Activated T-helper 1 cell treated with anti-CD3 and anti-CD28 coated beads, Interleukin-12 subunit alpha, Interleukin-12 subunit beta, Interleukin-2, Interleukin-4 antibody, amounts not matched to agents 30 ng/mL and 10 ng/mL and 1 ng/mL, durations not matched to agents 14 hours and 24 hours and 36 hours (primary cell): ENCODE measurements at regions of chr1 and their contacts with region 1.

Region 1: GRCh38 chr1:165597883-165598675 is 33.0 kb upstream of the MGST3 start:
- DNase-seq: peak; percentile 94
- H3K4me3 Mint-ChIP-seq: peak overlapping the region; percentile 86
- H3K27ac Mint-ChIP-seq: peak overlapping the region; percentile 93
- H3K4me1 Mint-ChIP-seq: peaks cover 45% of the 10 kb centered on the region
- H3K27me3 Mint-ChIP-seq: peaks cover 43% of the 10 kb centered on the region

Region 2: GRCh38 chr1:165144757-165145397 is 453.2 kb before region 1 on chr1:
- intact Hi-C with region 1: loop called (anchors 1 kb)
- DNase-seq: peak; percentile 14
- H3K4me3 Mint-ChIP-seq: no peak overlapping the region
- H3K27ac Mint-ChIP-seq: no peak overlapping the region
- H3K4me1 Mint-ChIP-seq: no peaks in the 10 kb centered on the region
- H3K27me3 Mint-ChIP-seq: no peaks in the 10 kb centered on the region

Region 3: DNA sequence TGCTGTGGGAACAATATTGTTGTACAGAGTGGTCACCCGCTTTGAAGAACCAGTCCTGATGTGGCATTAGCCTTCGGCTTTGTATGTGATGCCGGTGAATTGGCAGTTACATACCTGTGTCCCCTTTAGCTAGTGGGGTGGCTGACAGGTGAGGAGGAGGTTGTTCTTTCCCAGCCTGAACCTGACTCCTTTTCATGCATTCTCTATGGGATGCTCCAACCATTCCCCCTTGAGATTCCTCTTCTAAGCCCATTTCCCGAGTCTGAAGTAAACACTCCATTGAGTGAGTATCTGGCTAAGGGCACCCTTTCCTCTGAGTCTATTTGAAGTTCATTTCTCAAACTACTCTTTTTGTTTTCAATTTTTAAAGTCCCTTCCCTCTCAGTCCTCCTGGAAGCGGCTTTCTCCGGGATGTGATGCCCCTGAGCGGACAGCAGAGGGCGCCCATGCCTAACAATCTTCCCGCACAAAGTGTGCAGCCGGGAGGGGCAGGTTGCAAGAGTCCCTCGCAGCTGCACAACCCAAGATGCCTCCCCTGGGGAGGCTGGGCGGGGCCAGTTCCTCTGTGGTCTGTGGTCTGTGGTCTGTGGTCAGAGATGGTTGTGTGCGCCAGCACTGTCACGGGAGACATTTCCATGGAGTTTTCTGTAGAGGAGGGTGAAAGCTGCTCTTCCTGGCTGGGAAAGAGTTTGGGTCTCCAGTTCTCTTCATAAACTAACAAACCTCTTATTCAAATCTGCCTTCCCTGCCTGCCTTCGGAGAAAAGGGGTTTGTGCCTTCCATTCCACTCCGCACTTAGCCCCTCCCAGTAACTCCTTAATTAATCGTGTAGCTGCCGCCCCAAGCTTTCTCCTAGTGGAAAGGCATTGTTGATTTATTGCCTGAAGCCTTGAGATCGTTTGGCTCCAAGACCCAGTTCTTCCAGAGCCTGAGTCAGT is 205.2 kb before region 1 on chr1:
- intact Hi-C with region 1: loop called (anchors 1 kb)
- DNase-seq: peak; percentile 90
- H3K4me3 Mint-ChIP-seq: peak overlapping the region; percentile 58
- H3K27ac Mint-ChIP-seq: peak overlapping the region; percentile 92
- H3K4me1 Mint-ChIP-seq: peaks cover 25% of the 10 kb centered on the region
- H3K27me3 Mint-ChIP-seq: peaks cover 80% of the 10 kb centered on the region

Region 4: DNA sequence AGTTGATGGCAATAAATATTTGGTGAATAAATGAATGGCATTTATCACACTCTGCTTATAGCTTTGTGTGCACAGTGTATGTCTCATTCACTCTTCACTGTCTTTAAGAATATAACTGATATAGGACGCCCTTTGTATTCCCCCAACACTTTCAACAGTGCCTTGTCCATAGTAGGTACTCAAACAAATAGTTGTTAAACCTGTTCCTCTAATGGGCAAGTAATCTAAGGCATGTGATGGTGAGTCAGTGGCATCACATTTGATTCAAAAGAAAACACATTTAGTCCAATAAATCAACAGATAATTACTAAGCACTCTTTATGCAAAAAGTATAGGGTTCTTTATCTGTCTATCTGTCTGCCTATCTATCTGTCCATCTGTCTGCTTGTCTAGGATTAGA is 141.9 kb before region 1 on chr1:
- intact Hi-C with region 1: no loop called
- DNase-seq: no peak
- H3K4me3 Mint-ChIP-seq: no peak overlapping the region
- H3K27ac Mint-ChIP-seq: no peak overlapping the region
- H3K4me1 Mint-ChIP-seq: no peaks in the 10 kb centered on the region
- H3K27me3 Mint-ChIP-seq: peaks cover 8% of the 10 kb centered on the region

Region 5: DNA sequence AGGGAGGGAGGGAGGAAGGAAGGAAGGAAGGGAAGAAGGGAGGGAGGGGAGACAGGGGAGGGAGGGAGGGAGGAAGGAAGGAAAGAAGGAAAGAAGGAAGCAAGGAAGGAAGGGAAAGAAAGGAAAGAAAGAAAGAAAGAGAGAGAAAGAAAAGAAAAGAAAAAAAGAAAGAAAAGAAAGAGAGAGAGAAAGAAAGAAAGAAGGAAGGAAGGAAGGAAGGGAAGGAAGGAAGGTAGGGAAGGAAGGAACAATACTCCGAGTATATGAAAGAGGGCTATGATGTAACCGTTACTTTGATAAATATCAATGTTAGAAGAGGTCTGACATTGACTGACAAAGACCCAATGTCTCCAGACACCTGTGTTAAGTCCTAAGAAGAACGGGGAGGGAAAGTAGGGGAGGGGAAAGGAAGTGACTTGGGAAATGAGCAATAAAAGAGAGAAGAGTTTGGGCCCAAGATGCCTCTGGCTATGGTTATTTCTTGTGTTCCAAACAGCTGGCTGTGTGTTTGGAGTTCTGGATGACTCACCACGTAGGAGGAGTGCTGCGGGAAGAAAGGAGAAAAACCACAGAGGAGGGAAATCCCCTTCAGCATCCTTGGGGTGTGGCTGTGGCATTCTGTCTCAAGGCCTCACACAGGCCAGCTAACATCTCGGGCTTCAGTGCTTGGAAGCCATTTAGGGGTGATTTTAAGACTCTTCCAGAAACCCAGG is 116.1 kb before region 1 on chr1:
- intact Hi-C with region 1: loop called (anchors 2 kb)
- DNase-seq: no peak
- H3K4me3 Mint-ChIP-seq: peak overlapping the region; percentile 12
- H3K27ac Mint-ChIP-seq: no peak overlapping the region
- H3K4me1 Mint-ChIP-seq: peaks cover 25% of the 10 kb centered on the region
- H3K27me3 Mint-ChIP-seq: peaks cover 19% of the 10 kb centered on the region

Region 6: GRCh38 chr1:165697881-165698760 is 100.0 kb after region 1 on chr1 and contains the start of gene ALDH9A1:
- intact Hi-C with region 1: loop called (anchors 1 kb)
- DNase-seq: peak; percentile 82
- H3K4me3 Mint-ChIP-seq: peak within 1 kb of the TSS; percentile 95
- H3K27ac Mint-ChIP-seq: peak within 1 kb of the TSS; percentile 97
- H3K4me1 Mint-ChIP-seq: peaks cover 20% of the 10 kb centered on the region
- H3K27me3 Mint-ChIP-seq: peaks cover 2% of the 10 kb centered on the region
- total RNA-seq, gene ALDH9A1: 41.7 and 42.8 TPM in 2 replicates

Region 7: DNA sequence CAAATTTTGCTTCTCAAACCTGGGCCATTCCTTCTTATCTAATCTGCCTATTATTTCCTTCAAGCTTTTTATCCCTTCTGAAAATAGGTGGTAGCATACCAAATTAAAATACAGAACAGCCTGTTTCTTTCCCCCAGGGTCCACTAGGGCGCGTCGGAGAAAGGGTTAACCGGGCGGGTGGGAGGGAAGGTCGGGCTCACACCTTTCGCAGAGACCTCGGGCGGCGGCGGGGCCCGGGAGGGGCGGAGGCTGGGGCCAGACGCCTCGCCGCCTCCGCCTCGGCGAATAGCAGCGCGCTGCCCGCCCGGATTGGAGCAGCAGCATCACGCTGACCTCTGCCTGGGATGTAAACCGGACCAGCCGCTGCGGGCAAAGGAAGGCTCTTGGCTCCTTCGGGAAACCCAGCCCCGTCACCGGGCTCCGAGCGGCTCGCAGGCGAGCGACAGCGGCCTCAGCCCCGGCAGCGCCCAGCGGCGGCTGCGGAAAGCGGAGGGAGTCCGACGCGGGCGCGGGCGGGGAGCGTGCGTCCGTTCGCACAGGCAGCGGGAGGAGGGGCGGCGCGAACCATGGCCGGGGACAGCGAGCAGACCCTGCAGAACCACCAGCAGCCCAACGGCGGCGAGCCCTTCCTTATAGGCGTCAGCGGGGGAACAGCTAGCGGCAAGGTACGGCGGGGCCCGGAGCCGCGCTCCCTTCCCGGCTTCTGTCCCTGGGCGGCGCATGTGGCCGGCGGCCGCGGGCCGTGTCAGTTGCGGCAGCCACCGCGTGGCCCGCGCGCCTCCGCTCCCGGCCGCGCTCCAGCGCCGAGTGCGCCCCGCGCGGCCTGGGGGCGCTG is 229.4 kb after region 1 on chr1 and contains the start of gene UCK2:
- intact Hi-C with region 1: loop called (anchors 1 kb)
- DNase-seq: peak; percentile 51
- H3K4me3 Mint-ChIP-seq: peak within 1 kb of the TSS; percentile 96
- H3K27ac Mint-ChIP-seq: peak within 1 kb of the TSS; percentile 90
- H3K4me1 Mint-ChIP-seq: peaks cover 22% of the 10 kb centered on the region
- H3K27me3 Mint-ChIP-seq: peaks cover 15% of the 10 kb centered on the region
- total RNA-seq, gene UCK2: 109 and 112 TPM in 2 replicates

Region 8: GRCh38 chr1:166166695-166167571 is 568.9 kb after region 1 on chr1 and contains the start of gene FAM78B:
- intact Hi-C with region 1: loop called (anchors 1 kb)
- DNase-seq: peak; percentile 36
- H3K4me3 Mint-ChIP-seq: peak within 1 kb of the TSS; percentile 83
- H3K27ac Mint-ChIP-seq: no peak within 1 kb of the TSS
- H3K4me1 Mint-ChIP-seq: peaks cover 16% of the 10 kb centered on the region
- H3K27me3 Mint-ChIP-seq: peaks cover 39% of the 10 kb centered on the region
- total RNA-seq, gene FAM78B: 1.0 TPM in 2 replicates